Activated CD4-positive, alpha-beta T cell treated with anti-CD3 and anti-CD28 coated beads, Interleukin-2, amount 10 ng/mL, durations not matched to agents 24 days and 14 days (primary cell): ENCODE measurements at regions of chr12 and their contacts with region 1.

Region 1: DNA sequence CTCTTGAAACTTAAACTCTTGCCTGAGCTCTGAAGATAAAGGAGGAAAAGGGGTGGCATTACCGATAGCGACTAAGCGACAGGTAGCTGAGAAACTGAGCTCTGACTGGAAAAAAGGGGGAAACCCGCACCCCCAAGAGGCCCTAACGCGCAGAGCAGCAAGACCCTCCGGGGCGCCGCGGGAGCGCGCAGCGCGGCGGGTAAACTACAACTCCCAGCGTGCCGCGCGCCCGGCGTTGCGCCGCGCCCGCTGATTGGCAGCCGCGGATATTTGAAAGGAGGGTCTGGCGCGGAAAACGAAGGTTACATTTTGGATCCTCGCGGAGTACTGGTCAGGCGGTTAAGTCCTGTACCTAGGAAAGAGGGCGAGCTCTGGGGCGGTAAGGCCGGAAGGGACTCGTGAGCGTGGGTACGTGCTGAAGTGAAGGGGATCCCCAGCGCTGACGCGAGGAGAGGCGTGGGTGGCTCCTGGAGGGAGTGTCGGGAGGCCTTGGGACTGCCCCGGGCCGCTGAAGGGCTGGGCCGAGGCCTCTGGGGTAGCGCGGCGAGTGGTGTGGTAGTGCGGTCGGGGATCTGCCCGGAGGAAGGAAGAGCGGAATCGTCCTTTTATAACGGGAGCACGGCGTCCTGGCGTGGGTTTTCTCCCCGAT is at the start of gene ESPL1:
- DNase-seq: peak; percentile 96
- H3K4me3 Mint-ChIP-seq: peak within 1 kb of the TSS; percentile 89
- H3K27ac Mint-ChIP-seq: peak within 1 kb of the TSS; percentile 92
- H3K4me1 Mint-ChIP-seq: peaks cover 51% of the 10 kb centered on the region
- H3K27me3 Mint-ChIP-seq: no peaks in the 10 kb centered on the region
- total RNA-seq, gene ESPL1: 71.8 and 76.7 TPM in 2 replicates

Region 2: DNA sequence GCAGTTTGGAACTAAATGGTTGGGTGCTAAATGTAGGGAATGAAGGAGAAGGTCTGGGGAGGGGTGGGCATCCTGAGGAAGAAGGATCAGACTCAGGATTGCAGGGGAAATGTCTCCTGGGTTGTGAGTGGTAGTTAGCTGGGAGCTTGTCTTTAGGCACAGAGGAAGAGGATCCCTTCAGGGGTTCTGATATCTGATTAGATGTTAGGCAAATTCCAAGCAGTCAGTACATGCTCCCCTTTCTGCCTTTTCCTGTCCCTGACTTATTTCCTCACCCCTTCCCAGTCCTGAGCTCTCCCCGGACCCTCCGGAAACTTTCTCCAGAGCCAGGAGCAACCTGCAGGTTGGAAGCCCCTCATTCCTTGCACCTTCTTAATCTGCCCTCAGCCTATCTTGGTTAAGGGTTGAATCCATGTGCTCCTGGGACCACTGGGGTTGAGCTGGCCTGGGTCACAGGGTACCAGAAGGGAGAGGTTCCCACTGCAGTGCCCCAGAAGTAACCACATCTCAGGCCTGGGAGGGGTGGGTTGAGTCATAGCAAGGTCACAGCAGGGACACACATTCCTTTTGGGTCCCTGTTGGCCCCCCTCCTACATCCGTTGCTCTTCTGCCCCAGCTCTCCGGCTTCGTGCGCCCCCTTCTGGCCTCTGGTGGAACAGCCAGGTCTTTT is 169.0 kb before region 1 on chr12:
- intact Hi-C with region 1: no loop called
- DNase-seq: peak; percentile 96
- H3K4me3 Mint-ChIP-seq: peak overlapping the region; percentile 77
- H3K27ac Mint-ChIP-seq: peak overlapping the region; percentile 58
- H3K4me1 Mint-ChIP-seq: peaks cover 40% of the 10 kb centered on the region
- H3K27me3 Mint-ChIP-seq: peaks cover 23% of the 10 kb centered on the region

Region 3: DNA sequence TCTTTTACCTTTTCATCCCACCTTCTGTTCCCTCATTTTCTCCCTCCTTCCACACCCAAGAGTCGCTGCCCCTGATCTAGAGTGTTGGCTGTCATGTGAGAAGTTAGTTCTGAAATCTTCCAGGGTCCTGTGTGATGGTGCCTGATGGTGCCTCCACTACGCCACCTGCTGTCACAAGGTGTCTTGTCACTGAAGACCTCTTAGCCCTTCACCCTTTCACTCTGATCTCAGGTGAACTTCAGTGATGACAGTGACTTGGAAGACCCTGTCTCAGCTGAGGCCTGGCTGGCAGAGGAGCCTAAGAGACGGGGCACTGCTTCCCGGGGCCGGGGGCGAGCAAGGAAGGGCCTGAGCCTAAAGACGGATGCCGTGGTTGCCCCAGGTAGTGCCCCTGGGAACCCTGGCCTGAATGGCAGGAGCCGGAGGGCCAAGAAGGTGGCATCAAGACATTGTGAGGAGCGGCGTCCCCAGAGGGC is 19.7 kb after region 1 on chr12:
- intact Hi-C with region 1: loop called (anchors 1 kb)
- DNase-seq: peak; percentile 90
- H3K4me3 Mint-ChIP-seq: no peak overlapping the region
- H3K27ac Mint-ChIP-seq: peak overlapping the region; percentile 47
- H3K4me1 Mint-ChIP-seq: peaks cover 9% of the 10 kb centered on the region
- H3K27me3 Mint-ChIP-seq: no peaks in the 10 kb centered on the region

Region 4: DNA sequence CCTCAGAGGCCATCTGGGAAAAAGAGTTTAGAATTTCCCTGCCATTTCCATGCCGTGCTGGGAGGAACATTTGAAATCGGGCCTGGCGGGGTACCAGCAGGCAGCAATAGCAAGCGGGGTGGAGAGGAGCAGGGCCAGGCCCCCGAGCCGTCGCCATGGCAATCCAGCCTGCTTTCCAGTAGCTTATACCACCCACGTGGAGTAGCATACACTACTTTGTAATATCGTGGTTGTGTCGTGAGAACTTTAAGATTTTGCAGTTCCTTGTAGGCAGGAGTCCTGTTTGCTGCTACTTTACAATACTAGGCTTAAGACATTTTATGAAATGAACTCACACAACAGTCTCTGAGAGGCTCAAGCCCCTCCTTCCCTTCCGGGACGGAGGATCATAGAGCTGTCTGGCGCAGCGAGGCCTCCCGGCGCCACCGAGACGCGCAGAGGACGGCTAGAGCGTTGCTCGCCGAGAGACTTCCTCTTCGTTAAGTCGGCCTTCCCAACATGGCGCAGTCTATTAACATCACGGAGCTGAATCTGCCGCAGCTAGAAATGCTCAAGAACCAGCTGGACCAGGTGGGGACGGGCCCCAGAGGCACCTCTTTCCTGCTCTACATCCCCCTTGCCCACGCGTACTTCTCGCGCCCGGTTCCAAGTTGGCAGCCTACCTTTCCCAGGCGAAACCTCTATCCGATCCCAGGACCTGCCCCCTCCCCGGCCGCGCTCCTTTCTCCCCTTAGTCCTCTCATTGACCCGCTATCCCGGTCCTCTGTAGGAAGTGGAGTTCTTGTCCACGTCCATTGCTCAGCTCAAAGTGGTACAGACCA is 27.2 kb after region 1 on chr12 and contains the start of gene PFDN5:
- intact Hi-C with region 1: loop called (anchors 1 kb)
- DNase-seq: peak; percentile 97
- H3K4me3 Mint-ChIP-seq: peak within 1 kb of the TSS; percentile 98
- H3K27ac Mint-ChIP-seq: peak within 1 kb of the TSS; percentile 90
- H3K4me1 Mint-ChIP-seq: peaks cover 33% of the 10 kb centered on the region
- H3K27me3 Mint-ChIP-seq: no peaks in the 10 kb centered on the region
- total RNA-seq, gene PFDN5: 319 and 342 TPM in 2 replicates

Region 5: GRCh38 chr12:53313996-53314395 is 45.9 kb after region 1 on chr12:
- intact Hi-C with region 1: no loop called
- DNase-seq: no peak
- H3K4me3 Mint-ChIP-seq: no peak overlapping the region
- H3K27ac Mint-ChIP-seq: no peak overlapping the region
- H3K4me1 Mint-ChIP-seq: peaks cover 4% of the 10 kb centered on the region
- H3K27me3 Mint-ChIP-seq: no peaks in the 10 kb centered on the region

Region 6: GRCh38 chr12:53625946-53626701 is 358.0 kb after region 1 on chr12 and contains the start of gene ATF7:
- intact Hi-C with region 1: no loop called
- DNase-seq: peak; percentile 100
- H3K4me3 Mint-ChIP-seq: peak within 1 kb of the TSS; percentile 99
- H3K27ac Mint-ChIP-seq: peak within 1 kb of the TSS; percentile 88
- H3K4me1 Mint-ChIP-seq: peaks cover 29% of the 10 kb centered on the region
- H3K27me3 Mint-ChIP-seq: peaks cover 4% of the 10 kb centered on the region
- total RNA-seq, gene ATF7: 23.0 and 31.5 TPM in 2 replicates